ENCODE measurements at regions of chr17 and their contacts with region 1.

Region 1: GRCh38 chr17:45197555-45198334 is 23.9 kb upstream of the FMNL1 start:
- DNase-seq: peak; percentile 90
- H3K4me3 Mint-ChIP-seq: no peak overlapping the region
- H3K27ac Mint-ChIP-seq: no peak overlapping the region
- H3K4me1 Mint-ChIP-seq: peaks cover 6% of the 10 kb centered on the region
- H3K27me3 Mint-ChIP-seq: no peaks in the 10 kb centered on the region

Region 2: GRCh38 chr17:45110668-45111611 is 86.8 kb before region 1 on chr17:
- CTCF ChIA-PET with region 1: no interaction called
- DNase-seq: no peak
- H3K4me3 Mint-ChIP-seq: no peak overlapping the region
- H3K27ac Mint-ChIP-seq: no peak overlapping the region
- H3K4me1 Mint-ChIP-seq: no peaks in the 10 kb centered on the region
- H3K27me3 Mint-ChIP-seq: peaks cover 2% of the 10 kb centered on the region

Region 3: DNA sequence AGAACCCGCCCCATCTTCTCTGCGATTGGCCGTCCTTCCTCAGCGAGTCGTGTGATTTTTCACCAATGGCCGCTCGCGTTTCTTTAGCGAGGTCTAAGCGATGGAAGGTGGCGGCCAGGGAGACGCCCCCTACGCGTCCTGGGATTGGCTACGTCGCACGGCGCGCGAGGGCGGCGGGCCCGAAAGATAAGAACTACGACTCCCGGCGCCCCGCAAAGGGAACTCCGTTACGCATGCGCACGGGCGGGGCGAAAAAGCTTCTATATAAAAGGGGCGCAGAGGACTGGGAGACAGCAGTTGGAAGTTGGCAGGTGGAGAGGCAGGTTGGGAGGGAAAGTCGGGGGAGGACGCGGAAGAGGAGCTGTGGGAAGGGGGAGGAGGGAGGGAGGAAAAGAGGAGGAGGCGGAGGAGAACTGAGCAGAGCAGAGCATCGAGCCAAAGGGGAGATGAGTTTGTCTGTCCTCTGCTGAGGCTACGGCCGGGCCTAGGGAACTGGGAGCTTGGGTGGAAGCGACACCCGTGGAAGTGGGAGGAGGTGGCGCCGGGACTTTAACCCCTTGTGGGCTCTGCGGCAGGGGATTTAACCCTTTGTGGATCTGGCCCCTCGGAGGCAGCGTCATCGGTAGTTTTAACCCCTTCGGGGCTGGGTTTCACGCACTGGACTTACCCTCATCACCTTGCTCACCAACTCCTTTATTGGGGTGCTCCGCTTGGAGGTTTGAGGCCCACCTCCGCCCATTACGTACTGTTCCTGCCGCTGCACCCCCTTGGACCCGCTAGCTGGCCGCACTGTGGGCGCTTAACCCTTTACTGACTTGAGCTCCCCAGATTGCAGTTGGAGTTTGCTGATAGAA is 49.3 kb before region 1 on chr17 and contains the start of gene HEXIM1:
- CTCF ChIA-PET with region 1: interaction called, 104 read pairs
- DNase-seq: peak; percentile 99
- H3K4me3 Mint-ChIP-seq: peak within 1 kb of the TSS; percentile 99
- H3K27ac Mint-ChIP-seq: peak within 1 kb of the TSS; percentile 100
- H3K4me1 Mint-ChIP-seq: peaks cover 56% of the 10 kb centered on the region
- H3K27me3 Mint-ChIP-seq: peaks cover 17% of the 10 kb centered on the region

Region 4: GRCh38 chr17:45161019-45161825 is 36.5 kb before region 1 on chr17:
- CTCF ChIA-PET with region 1: interaction called, 17 read pairs
- DNase-seq: peak; percentile 98
- H3K4me3 Mint-ChIP-seq: peak overlapping the region; percentile 93
- H3K27ac Mint-ChIP-seq: peak overlapping the region; percentile 95
- H3K4me1 Mint-ChIP-seq: peaks cover 48% of the 10 kb centered on the region
- H3K27me3 Mint-ChIP-seq: no peaks in the 10 kb centered on the region

Region 5: GRCh38 chr17:45172454-45173286 is 25.1 kb before region 1 on chr17:
- CTCF ChIA-PET with region 1: interaction called, 13 read pairs
- DNase-seq: peak; percentile 72
- H3K4me3 Mint-ChIP-seq: peak overlapping the region; percentile 71
- H3K27ac Mint-ChIP-seq: peak overlapping the region; percentile 91
- H3K4me1 Mint-ChIP-seq: peaks cover 26% of the 10 kb centered on the region
- H3K27me3 Mint-ChIP-seq: peaks cover 7% of the 10 kb centered on the region